ENCODE measurements at regions of chr3 and their contacts with region 1.

Region 1: DNA sequence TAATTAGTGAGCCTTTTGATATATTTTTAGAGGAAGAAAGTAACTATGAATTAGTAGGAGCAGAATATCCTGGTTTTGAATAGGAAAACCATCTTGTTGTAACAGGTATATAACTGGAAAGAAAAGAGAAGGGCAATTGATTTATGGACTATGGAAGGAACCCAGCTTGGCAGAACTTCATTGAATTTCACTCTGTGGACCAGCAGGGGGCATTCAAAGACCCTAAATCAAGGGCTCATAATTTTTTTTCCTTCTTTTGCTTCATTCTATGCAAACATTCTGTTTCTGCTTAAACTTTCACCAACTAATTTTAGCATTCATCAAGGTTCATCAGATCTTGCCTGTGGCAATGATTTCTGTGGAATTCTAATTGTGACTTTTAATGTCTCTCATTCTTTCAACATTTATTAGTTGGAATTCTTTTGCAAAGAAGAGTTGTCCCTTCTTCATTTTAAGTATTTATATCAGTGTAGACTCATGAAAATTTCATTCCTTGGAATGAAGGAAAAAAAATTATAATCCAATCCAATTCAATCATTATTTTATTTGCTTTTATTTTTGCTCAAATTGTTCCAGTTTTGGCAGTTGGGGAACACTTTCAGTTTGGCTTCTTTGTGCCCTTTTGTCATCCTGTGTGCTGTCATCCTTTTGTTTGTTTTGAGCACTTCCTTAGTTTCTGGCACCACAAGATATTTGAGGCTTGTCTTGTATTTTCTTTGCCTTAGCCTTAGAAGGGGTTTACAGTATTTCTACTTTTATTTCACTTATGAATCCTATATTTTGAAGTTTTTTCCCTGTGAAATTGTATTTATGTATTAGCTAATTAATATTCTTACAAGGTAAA is 30.4 kb downstream of the NXPE3 start:
- DNase-seq: peak; percentile 60
- ATAC-seq: peak; percentile 74
- H3K4me3 Mint-ChIP-seq: peak overlapping the region; percentile 16
- H3K27ac Mint-ChIP-seq: peak overlapping the region; percentile 50
- H3K4me1 Mint-ChIP-seq: peaks cover 52% of the 10 kb centered on the region
- H3K27me3 Mint-ChIP-seq: no peaks in the 10 kb centered on the region

Region 2: DNA sequence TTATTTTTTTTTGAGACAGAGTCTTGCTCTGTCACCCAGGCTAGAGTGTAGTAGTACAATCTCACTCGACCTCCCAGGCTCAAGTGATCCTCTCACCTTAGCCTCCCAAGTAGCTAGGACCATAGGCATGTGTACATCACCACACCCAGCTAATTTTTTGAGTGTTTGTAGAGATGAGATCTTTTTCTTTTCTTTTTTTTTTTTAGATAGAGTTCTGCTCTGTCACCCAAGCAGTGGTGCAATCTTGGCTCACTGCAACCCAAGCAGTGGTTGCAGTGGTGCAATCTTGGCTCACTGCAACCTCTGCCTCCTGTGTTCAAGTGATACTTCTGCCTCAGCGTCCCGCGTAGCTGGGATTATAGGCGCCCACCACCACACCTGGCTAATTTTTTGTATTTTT is 79.8 kb before region 1 on chr3:
- CTCF ChIA-PET with region 1: no interaction called
- POLR2A ChIA-PET with region 1: no interaction called
- DNase-seq: no peak
- ATAC-seq: no peak
- H3K4me3 Mint-ChIP-seq: no peak overlapping the region
- H3K27ac Mint-ChIP-seq: no peak overlapping the region
- H3K4me1 Mint-ChIP-seq: peaks cover 20% of the 10 kb centered on the region
- H3K27me3 Mint-ChIP-seq: no peaks in the 10 kb centered on the region

Region 3: DNA sequence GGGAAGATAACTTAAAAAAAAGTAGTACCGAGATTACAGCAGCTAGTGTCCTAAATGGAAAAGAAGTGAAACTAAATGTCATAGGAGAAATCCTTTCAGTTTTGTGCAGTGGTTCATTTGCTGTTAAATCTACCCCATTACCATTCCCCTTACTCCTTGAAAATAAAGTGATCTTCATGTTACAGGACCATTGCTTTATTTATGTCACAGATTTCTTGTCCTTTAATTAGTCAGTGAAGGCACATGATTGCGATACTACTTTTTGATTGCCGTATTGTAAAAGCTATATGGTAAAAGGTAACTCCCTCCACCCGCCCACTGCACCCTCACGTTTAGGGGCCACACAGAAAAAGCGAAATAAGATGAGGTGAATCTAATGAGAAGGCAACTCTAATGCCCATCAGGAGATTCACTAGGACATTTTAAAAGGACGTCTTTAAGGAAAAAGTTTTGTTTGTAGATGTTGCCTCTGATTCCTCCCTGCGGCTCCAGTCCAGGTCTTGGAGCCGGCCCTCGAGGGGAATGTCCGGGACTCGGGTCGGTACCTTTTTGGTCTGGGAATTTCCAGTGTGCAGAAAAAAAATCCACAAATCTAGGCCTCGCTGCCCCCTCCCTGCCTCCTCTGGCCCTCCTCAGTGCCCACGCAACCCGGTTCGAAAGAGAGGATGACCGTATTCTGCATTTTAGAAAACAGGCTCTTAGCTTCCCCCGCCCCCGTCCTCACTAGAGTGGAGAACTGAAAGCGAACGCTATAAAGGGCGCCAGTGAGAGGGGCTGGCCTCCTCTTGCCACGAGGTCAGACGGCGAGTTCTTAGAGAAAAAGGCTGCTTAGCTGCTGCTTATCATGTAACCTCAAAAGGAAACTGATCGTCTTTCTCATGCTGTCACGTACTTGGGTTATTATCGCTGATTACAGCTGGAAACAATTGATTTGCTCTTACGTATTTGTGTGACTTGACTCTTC is 18.1 kb after region 1 on chr3:
- CTCF ChIA-PET with region 1: interaction called, 21 read pairs
- POLR2A ChIA-PET with region 1: interaction called, 6 read pairs
- DNase-seq: peak; percentile 89
- ATAC-seq: peak; percentile 92
- H3K4me3 Mint-ChIP-seq: peak overlapping the region; percentile 93
- H3K27ac Mint-ChIP-seq: peak overlapping the region; percentile 93
- H3K4me1 Mint-ChIP-seq: peaks cover 58% of the 10 kb centered on the region
- H3K27me3 Mint-ChIP-seq: no peaks in the 10 kb centered on the region

Measured in activated CD8-positive, alpha-beta T cell treated with anti-CD3 and anti-CD28 coated beads, Interleukin-2, amount 10 ng/mL, durations not matched to agents 7 days and 5 days (primary cell).